ENCODE measurements at regions of chr20 and their contacts with region 1.

Region 1: DNA sequence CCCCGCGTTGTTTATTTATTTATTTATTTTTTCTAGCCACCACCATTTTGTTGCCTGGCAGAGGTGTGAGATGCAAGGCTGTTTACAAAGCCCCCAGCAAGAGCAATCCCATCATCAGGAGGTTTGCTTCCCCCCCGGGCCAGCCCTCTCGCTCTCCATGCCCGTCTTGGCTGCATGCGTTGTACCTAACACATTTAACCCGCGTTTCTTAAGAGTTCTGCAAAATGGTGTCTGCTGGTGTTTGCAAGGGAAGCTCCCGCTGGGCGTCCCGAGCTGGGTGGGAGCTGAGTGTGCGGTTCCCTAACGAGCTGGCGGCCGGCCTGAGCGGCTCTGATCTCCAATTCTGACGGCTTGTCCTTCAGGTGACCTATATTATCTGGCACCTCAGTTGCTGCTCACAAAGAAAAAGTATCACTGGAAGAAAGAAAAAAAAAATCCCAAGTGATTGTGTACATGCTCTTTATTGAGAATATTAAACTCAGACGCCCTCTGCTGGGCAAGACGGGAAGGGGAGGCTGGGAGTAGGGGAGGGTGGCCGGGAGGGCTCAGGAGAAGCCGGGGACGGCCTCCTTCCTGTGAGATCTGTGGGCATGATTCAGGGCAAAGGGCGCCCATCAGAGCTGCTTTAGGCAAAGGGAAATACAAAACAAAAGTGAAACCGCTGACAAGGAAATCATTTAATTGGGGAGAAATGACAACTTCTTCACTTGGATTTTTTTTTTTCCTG is 154.8 kb downstream of the BCAS1 start:
- DNase-seq: peak; percentile 98
- H3K4me3 ChIP-seq: peak overlapping the region; percentile 70 to 71
- H3K27ac ChIP-seq: peak overlapping the region; percentile 73 to 91
- H3K4me1 ChIP-seq: peaks cover 27% of the 10 kb centered on the region
- H3K27me3 ChIP-seq: no peaks in the 10 kb centered on the region
- CTCF ChIP-seq: peak; percentile 84 to 95 (median 95)
- POLR2A ChIP-seq: no peak

Region 2: DNA sequence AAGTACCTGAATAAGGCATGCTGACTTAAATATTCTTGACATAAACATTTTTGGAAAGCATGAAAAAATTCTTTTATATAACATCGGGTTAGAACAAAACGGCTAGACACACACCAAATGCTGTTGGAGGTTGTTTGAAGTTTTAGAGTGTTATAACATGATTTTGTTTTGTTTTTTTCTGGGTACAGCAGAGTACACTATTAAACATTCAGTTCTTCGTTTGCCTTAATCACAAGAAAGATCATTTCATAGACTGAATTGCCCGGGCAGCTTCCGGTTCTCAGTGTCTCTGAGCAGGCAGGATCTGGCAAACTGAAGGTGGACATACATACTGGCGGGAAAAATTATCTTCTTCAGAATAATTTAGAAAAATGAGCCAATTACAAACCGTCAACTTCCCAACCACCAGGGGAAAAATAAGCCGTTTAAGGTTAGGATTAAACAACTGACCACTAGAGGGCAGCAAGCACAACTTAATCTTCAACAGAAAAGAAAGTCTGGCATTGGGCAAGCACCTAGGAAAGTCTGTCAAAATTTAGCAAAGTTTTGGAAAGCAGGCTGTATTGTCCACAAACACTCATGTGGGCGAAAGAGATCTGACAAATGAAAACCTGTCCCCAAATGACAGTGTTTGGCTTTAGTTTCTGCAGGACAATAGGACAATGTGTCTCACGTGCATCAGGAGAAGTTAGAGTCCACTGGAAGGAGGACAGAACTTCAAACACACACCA is 337.0 kb before region 1 on chr20:
- intact Hi-C with region 1: loop called (anchors 5 kb)
- DNase-seq: peak; percentile 78
- H3K4me3 ChIP-seq: no peak overlapping the region
- H3K27ac ChIP-seq: peak overlapping the region in 1 of 2 donors; percentile 48
- H3K4me1 ChIP-seq: peaks cover 4% of the 10 kb centered on the region
- H3K27me3 ChIP-seq: no peaks in the 10 kb centered on the region
- CTCF ChIP-seq: peak; percentile 93 to 99 (median 98)
- POLR2A ChIP-seq: no peak

Region 3: DNA sequence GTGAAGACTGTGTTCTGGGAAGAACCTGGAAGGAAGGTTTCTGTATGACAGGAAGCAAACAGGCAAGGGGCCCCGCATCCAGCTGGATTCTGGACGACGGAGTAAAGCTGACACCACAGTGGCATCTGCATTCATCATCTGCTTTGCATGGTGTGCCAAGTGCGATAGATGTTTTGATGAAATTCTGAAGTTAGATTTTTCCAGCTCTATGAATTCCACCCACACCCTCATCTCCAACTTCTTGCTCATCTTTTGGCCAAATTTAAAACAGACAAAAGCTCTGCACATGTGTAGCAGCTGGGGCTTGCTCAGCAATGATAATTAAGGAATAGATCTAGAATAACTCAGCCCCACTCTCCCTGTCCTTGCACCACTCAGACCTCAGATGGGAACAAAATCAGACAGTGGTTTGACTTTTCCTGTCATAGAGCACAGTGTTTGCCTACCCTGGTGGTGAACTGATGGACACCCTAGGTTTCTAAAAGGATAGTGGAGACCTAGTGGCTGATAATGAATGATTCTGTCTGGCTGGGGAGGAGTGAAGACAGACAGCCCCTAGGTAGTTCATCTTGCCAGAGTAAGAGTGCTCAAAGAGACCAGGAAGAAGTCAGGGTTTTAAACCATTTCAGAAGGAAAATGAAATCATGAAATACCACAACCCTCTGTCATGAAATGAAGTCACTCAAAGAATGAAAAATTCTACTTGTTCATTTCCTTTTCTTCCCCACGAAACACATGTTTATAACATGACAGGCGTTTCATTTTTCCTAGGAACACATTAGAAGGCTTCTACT is 68.9 kb after region 1 on chr20:
- intact Hi-C with region 1: no loop called
- DNase-seq: no peak
- H3K4me3 ChIP-seq: no peak overlapping the region
- H3K27ac ChIP-seq: no peak overlapping the region
- H3K4me1 ChIP-seq: no peaks in the 10 kb centered on the region
- H3K27me3 ChIP-seq: no peaks in the 10 kb centered on the region
- CTCF ChIP-seq: no peak
- POLR2A ChIP-seq: no peak

Region 4: GRCh38 chr20:54115151-54115854 is 199.7 kb after region 1 on chr20:
- intact Hi-C with region 1: no loop called
- DNase-seq: no peak
- H3K4me3 ChIP-seq: no peak overlapping the region
- H3K27ac ChIP-seq: no peak overlapping the region
- H3K4me1 ChIP-seq: no peaks in the 10 kb centered on the region
- H3K27me3 ChIP-seq: no peaks in the 10 kb centered on the region
- CTCF ChIP-seq: no peak
- POLR2A ChIP-seq: no peak

Measured in testis (tissue), 5 donors.